Activated T-helper 1 cell treated with anti-CD3 and anti-CD28 coated beads, Interleukin-12 subunit alpha, Interleukin-12 subunit beta, Interleukin-2, Interleukin-4 antibody, amounts not matched to agents 30 ng/mL and 10 ng/mL and 1 ng/mL, durations not matched to agents 14 hours and 24 hours and 36 hours (primary cell): ENCODE measurements at regions of chr5 and their contacts with region 1.

Region 1: DNA sequence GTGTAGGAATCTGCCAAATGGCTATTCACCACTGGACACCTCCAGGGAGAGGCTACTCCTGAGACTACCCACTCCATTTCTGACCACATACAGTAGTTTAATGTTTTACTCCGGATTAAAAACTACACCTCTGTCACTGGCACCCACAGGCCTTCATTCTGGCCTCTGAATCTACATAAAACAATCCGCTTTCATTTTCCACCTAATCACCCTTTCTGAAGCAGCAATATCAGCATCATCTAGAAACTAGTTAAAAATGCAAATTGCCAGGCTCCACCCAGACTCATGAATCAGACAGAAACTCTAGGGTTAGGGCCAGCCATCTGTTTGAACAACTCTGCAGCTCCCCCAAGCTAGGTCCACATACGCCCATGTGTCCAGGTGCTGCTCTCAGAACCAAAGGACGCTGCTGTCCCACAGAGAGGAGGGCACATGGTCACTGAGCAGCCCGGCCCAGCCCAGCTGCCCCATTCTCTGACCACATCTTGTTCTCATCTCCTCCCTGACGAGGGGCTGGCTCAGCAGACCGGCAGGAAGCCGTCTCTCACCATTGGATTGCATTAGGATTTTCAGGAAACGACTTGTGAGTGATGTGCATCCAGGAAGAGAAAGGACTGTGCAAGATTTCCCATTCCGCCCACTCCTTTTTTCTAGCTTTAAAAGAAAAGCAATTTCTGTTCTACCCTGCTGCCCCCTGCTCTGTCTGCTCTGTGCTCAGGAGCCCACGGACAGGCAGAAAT is 34.7 kb downstream of the ADAM19 start:
- DNase-seq: peak; percentile 55
- H3K4me3 Mint-ChIP-seq: peak overlapping the region; percentile 63
- H3K27ac Mint-ChIP-seq: peak overlapping the region; percentile 93
- H3K4me1 Mint-ChIP-seq: peaks cover 90% of the 10 kb centered on the region
- H3K27me3 Mint-ChIP-seq: no peaks in the 10 kb centered on the region

Region 2: DNA sequence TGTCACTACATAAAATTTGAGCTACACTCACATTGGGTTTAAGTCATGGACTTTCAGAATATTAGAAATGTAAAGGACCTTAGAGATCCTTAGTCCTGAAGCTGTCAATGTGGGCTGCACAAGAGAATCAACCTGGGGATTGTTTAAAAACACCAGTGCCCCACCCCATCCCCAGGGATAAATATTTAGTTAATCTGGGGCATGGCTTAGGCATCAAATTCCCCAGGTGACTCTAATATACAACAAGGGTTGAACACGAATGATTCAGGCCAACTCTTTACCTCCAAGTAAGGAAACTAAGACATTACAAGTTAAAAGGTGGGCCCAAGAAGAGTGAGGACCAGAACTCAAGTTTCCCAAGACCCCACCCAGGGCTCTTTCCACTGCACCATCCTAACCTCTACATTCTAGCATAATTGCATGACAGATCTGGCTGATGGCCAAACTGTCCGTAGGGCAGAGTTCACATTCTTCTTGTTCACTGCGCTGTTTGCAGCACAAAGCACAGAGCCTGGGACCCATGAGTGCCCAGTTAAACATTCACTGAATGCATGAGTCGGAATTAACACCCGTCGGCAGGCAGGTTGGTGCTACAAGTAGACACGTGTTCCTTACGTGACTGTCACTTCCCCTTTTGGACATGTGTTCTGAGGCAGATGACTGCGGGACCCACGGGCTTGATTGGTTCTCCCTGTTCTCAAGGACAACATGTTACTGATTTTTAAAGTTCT is 249.7 kb before region 1 on chr5:
- intact Hi-C with region 1: no loop called
- DNase-seq: no peak
- H3K4me3 Mint-ChIP-seq: no peak overlapping the region
- H3K27ac Mint-ChIP-seq: peak overlapping the region; percentile 84
- H3K4me1 Mint-ChIP-seq: peaks cover 65% of the 10 kb centered on the region
- H3K27me3 Mint-ChIP-seq: no peaks in the 10 kb centered on the region

Region 3: DNA sequence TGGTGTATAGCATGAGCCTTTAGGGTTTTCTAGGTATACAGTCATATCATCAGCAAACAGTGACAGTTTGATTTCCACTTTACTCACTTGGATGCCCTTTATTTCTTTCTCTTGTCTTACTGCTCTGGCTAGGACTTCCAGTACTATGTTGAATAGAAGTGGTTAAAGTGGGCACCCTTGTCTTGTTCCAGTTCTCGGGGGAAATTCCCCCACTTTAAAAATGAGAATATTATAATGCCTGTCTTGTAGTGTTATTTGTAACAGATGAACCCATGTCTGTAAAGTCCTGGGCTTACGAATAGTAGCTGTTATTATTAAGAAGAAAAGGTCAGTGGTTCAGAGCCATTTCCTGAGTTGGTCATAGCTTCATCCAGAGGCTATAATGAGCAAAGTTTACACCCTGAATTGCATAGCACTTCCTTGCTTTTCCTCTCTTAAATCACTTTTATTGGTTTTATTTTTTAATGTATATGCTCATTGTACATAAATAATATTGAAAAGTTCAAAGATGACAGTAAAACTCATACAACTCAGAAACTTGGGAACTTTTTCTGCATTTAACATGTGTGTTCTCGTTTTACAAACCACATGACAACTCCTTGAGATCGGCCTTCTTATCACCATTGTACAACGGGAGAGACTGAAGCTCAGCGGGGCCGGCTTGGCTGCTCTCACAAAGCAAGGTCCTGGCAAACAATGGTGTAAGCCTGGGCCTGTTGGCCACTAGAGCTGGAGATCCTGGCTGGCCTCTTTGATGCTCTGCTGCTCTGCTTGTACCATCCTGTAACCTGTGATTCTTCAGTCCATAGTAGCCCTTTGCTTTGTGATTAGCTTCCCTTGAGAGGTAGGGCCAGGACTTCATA is 189.7 kb before region 1 on chr5:
- intact Hi-C with region 1: loop called (anchors 2 kb)
- DNase-seq: no peak
- H3K4me3 Mint-ChIP-seq: peak overlapping the region; percentile 25
- H3K27ac Mint-ChIP-seq: peak overlapping the region; percentile 89
- H3K4me1 Mint-ChIP-seq: peaks cover 55% of the 10 kb centered on the region
- H3K27me3 Mint-ChIP-seq: no peaks in the 10 kb centered on the region

Region 4: DNA sequence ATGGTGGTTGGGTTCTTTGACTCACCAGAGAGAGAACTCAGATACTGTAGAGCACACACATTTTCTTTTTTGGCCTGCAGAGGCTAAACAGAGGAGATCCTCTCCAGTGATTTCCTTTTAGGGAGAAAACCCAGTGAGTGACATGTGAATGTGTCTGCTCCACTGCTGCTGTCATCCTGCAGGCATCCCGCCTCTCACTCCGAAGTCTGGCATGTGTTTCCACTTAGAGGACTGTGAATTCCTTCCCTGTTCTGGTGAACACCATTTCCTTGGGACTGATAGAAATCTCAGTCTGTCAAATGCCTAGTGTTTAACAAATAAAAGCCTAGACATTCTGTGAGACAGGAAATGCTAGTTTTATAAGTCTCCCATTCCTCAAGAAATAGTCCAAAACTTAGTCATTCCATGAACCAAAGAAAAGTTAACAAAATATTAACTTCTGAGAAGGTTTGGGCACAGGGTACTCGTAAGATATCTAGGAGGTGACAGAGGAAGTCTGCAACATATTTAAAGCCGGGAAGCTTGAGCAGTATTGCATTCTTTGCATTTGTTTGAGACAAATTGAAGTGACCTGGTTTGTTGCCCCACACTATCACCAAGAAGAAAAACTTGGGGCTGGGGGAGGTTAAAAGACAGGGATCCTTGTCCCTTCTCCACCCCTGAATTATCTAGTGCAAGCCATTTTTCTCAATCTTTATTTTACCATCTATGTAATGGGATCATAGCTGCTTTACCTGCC is 155.7 kb before region 1 on chr5:
- intact Hi-C with region 1: no loop called
- DNase-seq: no peak
- H3K4me3 Mint-ChIP-seq: no peak overlapping the region
- H3K27ac Mint-ChIP-seq: no peak overlapping the region
- H3K4me1 Mint-ChIP-seq: peaks cover 18% of the 10 kb centered on the region
- H3K27me3 Mint-ChIP-seq: no peaks in the 10 kb centered on the region

Region 5: GRCh38 chr5:157575381-157576020 is 34.6 kb after region 1 on chr5 and contains the start of gene ADAM19:
- intact Hi-C with region 1: loop called (anchors 1 kb)
- DNase-seq: peak; percentile 58
- H3K4me3 Mint-ChIP-seq: peak within 1 kb of the TSS; percentile 96
- H3K27ac Mint-ChIP-seq: peak within 1 kb of the TSS; percentile 92
- H3K4me1 Mint-ChIP-seq: peaks cover 64% of the 10 kb centered on the region
- H3K27me3 Mint-ChIP-seq: no peaks in the 10 kb centered on the region
- total RNA-seq, gene ADAM19: 341 and 348 TPM in 2 replicates

Region 6: DNA sequence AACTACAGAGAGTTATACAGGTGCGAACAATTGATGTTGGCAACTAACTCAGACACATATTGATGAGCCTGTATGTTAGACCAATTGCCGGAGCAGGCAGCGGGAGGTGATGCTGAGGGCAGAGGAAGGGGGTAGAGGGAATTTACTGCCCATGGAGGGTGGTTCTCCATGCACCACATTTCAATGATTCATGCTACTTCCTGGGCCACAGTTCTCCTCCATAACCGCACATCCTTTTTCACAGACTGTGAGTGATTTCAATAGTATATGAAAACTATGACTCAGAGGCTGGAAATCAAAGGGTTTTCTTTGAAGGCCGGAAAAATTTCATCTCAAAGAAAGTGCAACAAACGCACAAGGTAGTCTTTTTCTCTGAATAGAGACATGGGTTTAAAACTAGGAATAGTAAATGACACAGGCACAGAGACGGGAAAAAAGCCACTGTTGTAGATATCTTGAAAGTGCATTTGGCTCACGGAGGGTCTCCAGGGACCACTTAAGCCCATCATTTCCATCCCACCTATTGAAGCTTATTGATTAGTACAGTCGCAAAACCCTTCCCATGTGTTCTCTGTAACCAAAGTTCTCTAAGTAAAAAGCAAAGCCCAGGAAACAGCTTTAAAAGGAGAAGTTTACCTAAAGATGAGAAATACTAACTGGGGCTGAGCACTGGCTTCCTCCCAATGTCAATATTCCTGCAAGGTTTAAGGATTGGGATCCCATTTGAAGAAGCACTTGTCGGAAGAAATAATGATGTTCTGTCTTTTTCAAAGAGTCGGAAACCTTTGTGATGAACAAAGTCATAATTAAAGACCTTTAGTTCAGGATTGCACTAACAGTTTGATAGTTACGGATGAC is 62.7 kb after region 1 on chr5:
- intact Hi-C with region 1: loop called (anchors 1 kb)
- DNase-seq: peak; percentile 74
- H3K4me3 Mint-ChIP-seq: peak overlapping the region; percentile 59
- H3K27ac Mint-ChIP-seq: peak overlapping the region; percentile 88
- H3K4me1 Mint-ChIP-seq: peaks cover 79% of the 10 kb centered on the region
- H3K27me3 Mint-ChIP-seq: no peaks in the 10 kb centered on the region

Region 7: GRCh38 chr5:157731272-157732129 is 190.6 kb after region 1 on chr5 and contains the start of gene THG1L:
- intact Hi-C with region 1: loop called (anchors 1 kb)
- DNase-seq: peak; percentile 97
- H3K4me3 Mint-ChIP-seq: peak within 1 kb of the TSS; percentile 88
- H3K27ac Mint-ChIP-seq: peak within 1 kb of the TSS; percentile 97
- H3K4me1 Mint-ChIP-seq: peaks cover 37% of the 10 kb centered on the region
- H3K27me3 Mint-ChIP-seq: no peaks in the 10 kb centered on the region
- total RNA-seq, gene THG1L: 26.8 and 30.1 TPM in 2 replicates